Calu3 (cell line): ENCODE measurements at regions of chr14 and their contacts with region 1.

Region 1: DNA sequence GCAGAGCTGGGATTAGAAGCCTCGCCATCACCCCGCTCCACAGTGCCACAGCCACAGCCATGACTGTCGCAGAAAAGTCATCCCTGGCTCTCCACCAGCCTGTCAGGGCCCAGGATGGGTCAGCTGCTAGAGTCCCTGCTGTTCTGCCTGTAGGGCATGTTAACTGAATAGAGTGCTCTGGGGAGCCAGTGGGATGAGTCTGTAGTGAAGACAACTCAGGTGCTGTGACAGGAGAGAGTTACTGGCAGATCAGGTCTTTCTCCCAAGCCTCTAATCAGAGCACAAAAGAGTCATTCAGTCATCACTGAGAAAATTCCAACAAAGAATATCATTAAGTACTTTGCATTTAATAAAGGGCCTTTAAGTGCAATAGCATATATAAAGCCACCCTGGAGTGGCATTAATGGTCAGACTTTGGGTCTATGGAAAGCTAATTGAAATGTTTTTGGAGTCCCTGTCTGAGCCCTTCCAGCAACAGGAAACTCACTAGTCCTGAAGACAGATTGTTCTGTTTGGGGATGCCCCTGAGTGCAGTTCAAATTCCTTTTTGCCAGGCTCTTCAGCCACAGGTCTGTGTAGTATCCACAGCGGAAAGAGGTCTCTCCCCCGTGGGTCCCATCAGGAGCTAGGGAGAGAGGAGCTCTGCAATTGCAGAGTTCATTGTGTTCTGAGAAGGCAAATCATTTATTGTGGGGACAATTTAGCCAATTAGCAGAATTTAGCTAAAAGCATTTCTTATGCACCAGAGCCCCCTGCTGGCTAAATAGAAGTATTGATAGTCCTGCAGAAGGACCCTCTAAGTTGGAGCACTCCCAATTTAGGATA is 45.2 kb upstream of the C14orf132 start:
- DNase-seq: peak; percentile 29
- H3K4me3 Mint-ChIP-seq: no peak overlapping the region
- H3K27ac Mint-ChIP-seq: no peak overlapping the region
- H3K4me1 Mint-ChIP-seq: no peaks in the 10 kb centered on the region
- H3K27me3 Mint-ChIP-seq: peaks cover 85% of the 10 kb centered on the region
- CTCF ChIP-seq: peak; percentile 73

Region 2: DNA sequence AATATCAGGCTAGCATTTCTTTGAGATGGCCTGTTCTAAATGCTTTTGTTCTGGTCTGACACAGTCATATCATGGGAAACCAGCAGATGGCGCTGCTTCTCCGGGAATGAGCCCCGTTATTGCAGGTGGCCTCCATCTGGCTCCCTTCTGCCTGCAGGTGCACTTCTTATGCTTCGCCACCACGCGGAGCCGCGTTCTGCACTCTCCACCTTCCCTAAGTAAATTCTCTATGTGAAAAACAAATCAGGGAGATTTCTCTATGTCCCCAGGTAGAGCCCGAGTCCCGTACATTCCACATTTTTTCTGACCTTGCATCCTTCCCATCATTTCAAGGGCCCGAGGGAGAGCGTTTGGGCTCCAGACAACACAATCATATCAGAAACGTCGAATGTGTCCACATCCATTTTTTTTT is 433.0 kb before region 1 on chr14:
- CTCF ChIA-PET with region 1: interaction called, 6 read pairs
- intact Hi-C with region 1: loop called (anchors 1 kb)
- DNase-seq: peak; percentile 90
- H3K4me3 Mint-ChIP-seq: peak overlapping the region; percentile 33
- H3K27ac Mint-ChIP-seq: no peak overlapping the region
- H3K4me1 Mint-ChIP-seq: peaks cover 7% of the 10 kb centered on the region
- H3K27me3 Mint-ChIP-seq: peaks cover 16% of the 10 kb centered on the region
- CTCF ChIP-seq: peak; percentile 88

Region 3: GRCh38 chr14:95774265-95775160 is 219.5 kb before region 1 on chr14:
- CTCF ChIA-PET with region 1: no interaction called
- intact Hi-C with region 1: loop called (anchors 5 kb)
- DNase-seq: peak; percentile 59
- H3K4me3 Mint-ChIP-seq: no peak overlapping the region
- H3K27ac Mint-ChIP-seq: no peak overlapping the region
- H3K4me1 Mint-ChIP-seq: no peaks in the 10 kb centered on the region
- H3K27me3 Mint-ChIP-seq: peaks cover 89% of the 10 kb centered on the region
- CTCF ChIP-seq: peak; percentile 59

Region 4: GRCh38 chr14:96053600-96054381 is 59.8 kb after region 1 on chr14:
- CTCF ChIA-PET with region 1: interaction called, 5 read pairs
- intact Hi-C with region 1: loop called (anchors 5 kb)
- DNase-seq: no peak
- H3K4me3 Mint-ChIP-seq: no peak overlapping the region
- H3K27ac Mint-ChIP-seq: no peak overlapping the region
- H3K4me1 Mint-ChIP-seq: no peaks in the 10 kb centered on the region
- H3K27me3 Mint-ChIP-seq: peaks cover 37% of the 10 kb centered on the region
- CTCF ChIP-seq: no peak

Region 5: DNA sequence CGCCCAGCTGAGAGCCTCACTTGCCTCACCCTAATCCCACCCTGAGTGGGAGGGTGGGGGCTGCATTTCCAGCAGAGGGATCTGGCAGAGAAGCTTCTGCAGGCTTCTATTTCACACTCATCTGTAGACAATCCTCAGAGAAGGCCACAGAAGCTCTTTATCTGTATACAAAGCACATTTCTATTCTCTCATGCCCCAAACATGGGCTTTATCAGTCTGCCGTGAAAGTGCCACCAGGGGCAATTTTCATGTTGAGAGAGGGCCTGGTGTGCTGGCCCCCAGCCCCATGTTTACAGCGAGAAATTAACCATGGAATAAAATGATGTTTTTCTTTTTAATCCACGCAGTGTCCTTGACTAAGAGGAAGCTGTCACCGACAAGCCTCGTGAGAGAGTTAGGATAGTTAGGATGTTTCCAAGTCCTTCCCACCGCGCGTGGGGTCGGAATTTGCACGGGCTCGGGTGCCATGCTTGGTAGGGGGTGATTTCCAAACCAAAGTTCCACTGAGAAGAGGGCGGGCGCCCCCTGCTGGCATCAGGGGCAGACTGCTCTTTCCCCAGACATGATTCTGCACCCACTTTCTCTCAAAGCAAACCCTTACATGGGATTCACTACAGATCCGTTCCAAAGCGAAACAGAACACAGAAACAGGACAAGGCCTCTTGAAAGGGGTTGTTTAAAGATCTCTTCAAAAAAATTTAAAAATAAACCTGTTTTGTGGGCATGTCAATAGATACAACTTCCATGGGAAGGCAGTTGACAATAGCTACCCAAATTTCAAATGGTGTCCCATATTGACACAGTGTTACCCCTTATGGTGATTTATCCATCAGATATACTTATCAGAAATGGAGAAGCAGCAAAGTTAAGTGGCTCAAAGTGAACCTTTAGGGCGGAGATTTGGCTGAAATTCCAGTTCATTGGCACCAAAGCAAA is 281.5 kb after region 1 on chr14:
- CTCF ChIA-PET with region 1: no interaction called
- intact Hi-C with region 1: loop called (anchors 5 kb)
- DNase-seq: peak; percentile 82
- H3K4me3 Mint-ChIP-seq: no peak overlapping the region
- H3K27ac Mint-ChIP-seq: no peak overlapping the region
- H3K4me1 Mint-ChIP-seq: peaks cover 7% of the 10 kb centered on the region
- H3K27me3 Mint-ChIP-seq: no peaks in the 10 kb centered on the region
- CTCF ChIP-seq: peak; percentile 91